H1 (cell line): ENCODE measurements at regions of chr12 and their contacts with region 1.

Region 1: GRCh38 chr12:32115404-32116104 is 8.9 kb downstream of the BICD1 start:
- DNase-seq: no peak
- H3K4me3 ChIP-seq: no peak overlapping the region
- H3K27ac ChIP-seq: no peak overlapping the region
- H3K4me1 ChIP-seq: peaks cover 6 to 17% (median 10%) of the 10 kb centered on the region in 4 experiments
- H3K27me3 ChIP-seq: no peaks in the 10 kb centered on the region
- CTCF ChIP-seq: no peak
- EP300 ChIP-seq: no peak
- POLR2A ChIP-seq: 0 out of 3 replicates have a peak, but pooled peaks of 1 of the 2 experiments have one; percentile 20
- RAD21 ChIP-seq: no peak

Region 2: GRCh38 chr12:31989571-31990362 is 125.8 kb before region 1 on chr12:
- CTCF ChIA-PET with region 1: no interaction called
- POLR2A ChIA-PET with region 1: no interaction called
- DNase-seq: no peak
- H3K4me3 ChIP-seq: no peak overlapping the region
- H3K27ac ChIP-seq: no peak overlapping the region
- H3K4me1 ChIP-seq: no peaks in the 10 kb centered on the region; a peak in 1 of 7 replicates
- H3K27me3 ChIP-seq: no peaks in the 10 kb centered on the region
- CTCF ChIP-seq: no peak
- EP300 ChIP-seq: no peak
- POLR2A ChIP-seq: no peak
- RAD21 ChIP-seq: no peak

Region 3: GRCh38 chr12:32015036-32015435 is 100.5 kb before region 1 on chr12:
- CTCF ChIA-PET with region 1: no interaction called
- POLR2A ChIA-PET with region 1: no interaction called
- DNase-seq: no peak
- H3K4me3 ChIP-seq: no peak overlapping the region
- H3K27ac ChIP-seq: no peak overlapping the region
- H3K4me1 ChIP-seq: peaks cover 2 to 15% (median 10%) of the 10 kb centered on the region in 4 experiments
- H3K27me3 ChIP-seq: no peaks in the 10 kb centered on the region
- CTCF ChIP-seq: no peak
- EP300 ChIP-seq: no peak
- POLR2A ChIP-seq: no peak
- RAD21 ChIP-seq: no peak

Region 4: GRCh38 chr12:32089586-32089985 is 26.0 kb before region 1 on chr12:
- CTCF ChIA-PET with region 1: no interaction called
- POLR2A ChIA-PET with region 1: no interaction called
- DNase-seq: no peak
- H3K4me3 ChIP-seq: no peak overlapping the region
- H3K27ac ChIP-seq: no peak overlapping the region
- H3K4me1 ChIP-seq: peaks cover 0 to 4% (median 1%) of the 10 kb centered on the region in 4 experiments; a peak in 3 of 7 replicates
- H3K27me3 ChIP-seq: no peaks in the 10 kb centered on the region
- CTCF ChIP-seq: no peak
- EP300 ChIP-seq: no peak
- POLR2A ChIP-seq: no peak
- RAD21 ChIP-seq: no peak

Region 5: GRCh38 chr12:32126720-32127119 is 11.2 kb after region 1 on chr12:
- CTCF ChIA-PET with region 1: interaction called, 4 read pairs
- POLR2A ChIA-PET with region 1: interaction called, 15 read pairs
- DNase-seq: no peak
- H3K4me3 ChIP-seq: no peak overlapping the region
- H3K27ac ChIP-seq: no peak overlapping the region
- H3K4me1 ChIP-seq: peaks cover 5 to 13% (median 6%) of the 10 kb centered on the region in 4 experiments; a peak in 4 of 7 replicates
- H3K27me3 ChIP-seq: no peaks in the 10 kb centered on the region
- CTCF ChIP-seq: no peak
- EP300 ChIP-seq: no peak
- POLR2A ChIP-seq: no peak
- RAD21 ChIP-seq: no peak

Region 6: DNA sequence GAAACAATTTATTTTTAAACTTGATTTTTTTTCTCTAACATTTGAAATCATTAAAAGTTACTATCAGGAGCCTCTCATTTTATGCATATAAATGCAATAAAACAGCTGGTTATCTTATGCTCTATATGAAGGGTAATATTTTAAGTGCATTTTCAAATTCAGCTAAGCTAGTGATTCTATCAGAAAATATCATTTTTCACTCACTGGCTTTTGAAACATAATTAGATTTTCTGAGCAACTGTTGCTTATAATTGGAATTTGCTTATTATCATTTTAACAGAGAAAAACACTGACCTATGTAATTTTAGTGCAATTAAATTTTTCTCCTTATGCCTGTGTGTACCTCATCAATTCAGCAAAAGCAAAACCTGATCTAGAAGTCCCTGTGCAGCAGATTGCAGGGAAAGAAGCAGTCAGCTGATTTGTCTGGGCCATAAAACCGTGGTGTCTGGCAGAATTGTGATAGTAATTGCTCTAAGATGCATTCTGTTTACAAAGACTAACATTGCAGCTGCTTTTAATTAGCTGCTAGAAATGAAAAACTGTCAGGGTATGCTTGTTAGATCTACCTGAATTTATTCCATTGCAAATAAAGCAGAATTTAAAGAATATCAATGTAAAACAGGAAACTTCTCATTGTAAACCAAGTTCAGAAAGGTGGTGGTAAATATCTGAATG is 66.1 kb after region 1 on chr12:
- CTCF ChIA-PET with region 1: no interaction called
- POLR2A ChIA-PET with region 1: no interaction called
- DNase-seq: no peak
- H3K4me3 ChIP-seq: no peak overlapping the region
- H3K27ac ChIP-seq: no peak overlapping the region
- H3K4me1 ChIP-seq: peaks cover 0 to 9% (median 3%) of the 10 kb centered on the region in 4 experiments; a peak in 3 of 7 replicates
- H3K27me3 ChIP-seq: no peaks in the 10 kb centered on the region
- CTCF ChIP-seq: no peak
- EP300 ChIP-seq: no peak
- POLR2A ChIP-seq: no peak
- RAD21 ChIP-seq: no peak